A549 (cell line): ENCODE measurements at regions of chr16 and their contacts with region 1.

Region 1: GRCh38 chr16:21194771-21195301 is 16.5 kb downstream of the ZP2 start:
- DNase-seq: no peak
- ATAC-seq: no peak
- H3K4me3 ChIP-seq: no peak overlapping the region
- H3K27ac ChIP-seq: no peak overlapping the region
- H3K4me1 ChIP-seq: no peaks in the 10 kb centered on the region
- CTCF ChIP-seq: no peak
- EP300 ChIP-seq: no peak
- POLR2A ChIP-seq: no peak
- RAD21 ChIP-seq: no peak

Region 2: GRCh38 chr16:21179126-21179982 is 15.5 kb before region 1 on chr16:
- CTCF ChIA-PET with region 1: interaction called, 37 read pairs
- POLR2A ChIA-PET with region 1: no interaction called
- DNase-seq: no peak
- ATAC-seq: no peak
- H3K4me3 ChIP-seq: no peak overlapping the region
- H3K27ac ChIP-seq: no peak overlapping the region
- H3K4me1 ChIP-seq: no peaks in the 10 kb centered on the region
- CTCF ChIP-seq: no peak
- EP300 ChIP-seq: no peak
- POLR2A ChIP-seq: no peak
- RAD21 ChIP-seq: no peak